ENCODE measurements at regions of chr9 and their contacts with region 1.

Region 1: DNA sequence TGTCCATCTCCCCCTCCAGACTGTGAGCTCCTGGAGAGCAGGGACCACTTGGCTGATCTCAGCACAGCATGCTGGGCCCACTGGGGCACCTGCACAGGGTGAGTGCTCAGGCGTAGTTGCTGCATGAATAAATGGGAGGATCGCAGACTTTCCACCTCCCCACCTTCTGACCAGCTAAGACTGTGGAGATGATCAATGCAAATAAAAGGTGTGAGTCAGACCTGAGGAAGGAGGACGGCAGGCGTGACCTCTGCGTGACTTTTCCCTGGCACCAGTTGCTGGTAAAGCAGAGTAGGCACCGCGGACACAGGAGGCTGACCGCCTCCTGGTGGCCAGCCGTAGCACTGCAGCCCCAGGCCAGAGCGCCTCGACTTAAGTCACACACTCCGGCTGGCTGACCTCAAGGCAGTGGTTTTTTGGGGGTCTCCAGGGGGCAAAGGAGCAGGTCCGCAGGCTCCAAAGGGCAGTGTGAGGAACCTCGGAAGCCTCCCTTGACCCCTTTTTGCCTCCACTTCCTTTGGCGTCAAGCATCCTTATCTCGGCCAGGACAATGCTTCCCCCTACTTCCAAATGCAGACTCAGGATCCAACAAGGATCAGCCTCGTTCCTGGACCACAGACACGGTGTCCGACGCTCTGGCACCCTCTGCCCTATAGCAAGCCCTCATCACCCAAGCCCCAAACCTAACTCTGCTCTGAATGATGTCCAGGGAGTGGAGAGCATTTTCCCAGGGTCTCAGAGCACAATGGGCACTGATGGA is 12.7 kb upstream of the TDRD7 start:
- DNase-seq: peak; percentile 85
- ATAC-seq: peak; percentile 85 to 93
- H3K4me3 ChIP-seq: no peak overlapping the region
- H3K27ac ChIP-seq: peak overlapping the region in 1 of 2 experiments; percentile 59; a peak in 3 of 6 replicates
- H3K4me1 ChIP-seq: peaks cover 10% of the 10 kb centered on the region
- CTCF ChIP-seq: peak; percentile 72
- EP300 ChIP-seq: no peak
- POLR2A ChIP-seq: no peak
- RAD21 ChIP-seq: peak; percentile 80 to 84

Region 2: DNA sequence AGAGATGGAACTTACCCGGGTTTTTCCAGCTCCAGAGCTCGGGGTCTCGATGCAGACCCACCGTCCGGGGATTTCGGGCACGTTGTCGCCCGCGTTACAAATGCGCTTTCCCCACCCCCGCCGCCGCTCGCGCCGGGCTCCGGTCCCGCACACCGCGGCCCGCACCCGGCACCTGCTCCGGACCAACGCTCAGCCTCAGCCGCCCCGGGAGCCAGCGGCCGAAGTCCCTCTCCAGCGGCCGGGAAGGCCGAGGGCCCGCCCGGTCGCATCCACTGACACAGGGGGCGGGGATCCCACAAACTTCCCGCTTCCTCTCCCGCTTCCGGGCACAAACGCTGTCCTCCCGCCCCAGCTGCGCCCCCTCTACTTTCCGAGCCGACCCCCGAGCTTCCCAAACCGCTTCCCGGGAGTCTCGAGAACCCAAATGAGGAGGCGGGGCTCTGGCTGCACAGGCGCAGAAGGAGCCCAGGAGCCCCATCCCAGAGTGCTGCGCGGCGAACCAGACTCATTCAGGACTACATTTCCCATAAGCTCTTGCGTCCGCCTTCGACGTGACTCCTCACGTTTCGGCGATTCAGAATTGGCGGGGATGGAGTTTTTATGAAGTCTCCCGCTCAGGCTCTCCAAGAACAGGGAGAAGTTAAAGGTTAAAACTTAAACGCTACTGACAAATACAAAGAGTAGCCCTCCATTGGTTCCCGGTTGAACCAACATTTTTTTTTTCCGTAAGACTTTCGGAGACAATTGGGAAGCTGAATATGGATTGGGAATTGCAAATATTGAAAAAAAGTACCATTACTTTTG is 544.9 kb before region 1 on chr9 and contains the start of gene ZNF782:
- CTCF ChIA-PET with region 1: interaction called, 10 read pairs
- POLR2A ChIA-PET with region 1: no interaction called
- DNase-seq: peak; percentile 83 to 95
- ATAC-seq: peak; percentile 94 to 99
- H3K4me3 ChIP-seq: peak within 1 kb of the TSS; percentile 65
- H3K27ac ChIP-seq: peak within 1 kb of the TSS; percentile 69 to 89
- H3K4me1 ChIP-seq: no peaks in the 10 kb centered on the region; the same call in 2 of the 3 replicates
- CTCF ChIP-seq: no peak
- EP300 ChIP-seq: no peak
- POLR2A ChIP-seq: peak; percentile 65
- RAD21 ChIP-seq: no peak
- polyA plus RNA-seq, gene ZNF782: 2.1 and 2.7 TPM in 2 replicates

Region 3: DNA sequence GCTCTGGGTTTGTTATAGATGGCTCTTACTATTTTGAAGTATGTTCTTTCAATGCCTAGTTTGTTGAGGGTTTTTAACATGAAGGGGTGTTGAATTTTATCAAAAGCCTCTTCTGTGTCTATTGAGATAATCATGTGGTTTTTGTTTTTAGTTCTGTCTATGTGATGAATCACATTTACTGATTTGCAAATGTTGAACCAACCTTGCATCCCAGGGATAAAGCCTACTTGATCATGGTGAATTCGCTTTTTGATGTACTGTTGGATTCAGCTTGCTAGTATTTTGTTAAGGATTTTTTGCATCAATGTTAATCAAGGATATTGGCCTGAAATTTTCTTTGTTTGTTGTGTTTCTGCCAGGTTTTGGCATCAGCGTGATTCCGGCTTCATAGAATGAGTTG is 66.2 kb before region 1 on chr9:
- CTCF ChIA-PET with region 1: no interaction called
- POLR2A ChIA-PET with region 1: no interaction called
- DNase-seq: no peak
- ATAC-seq: no peak
- H3K4me3 ChIP-seq: no peak overlapping the region
- H3K27ac ChIP-seq: no peak overlapping the region
- H3K4me1 ChIP-seq: no peaks in the 10 kb centered on the region
- CTCF ChIP-seq: no peak
- EP300 ChIP-seq: no peak
- POLR2A ChIP-seq: no peak
- RAD21 ChIP-seq: no peak

Region 4: DNA sequence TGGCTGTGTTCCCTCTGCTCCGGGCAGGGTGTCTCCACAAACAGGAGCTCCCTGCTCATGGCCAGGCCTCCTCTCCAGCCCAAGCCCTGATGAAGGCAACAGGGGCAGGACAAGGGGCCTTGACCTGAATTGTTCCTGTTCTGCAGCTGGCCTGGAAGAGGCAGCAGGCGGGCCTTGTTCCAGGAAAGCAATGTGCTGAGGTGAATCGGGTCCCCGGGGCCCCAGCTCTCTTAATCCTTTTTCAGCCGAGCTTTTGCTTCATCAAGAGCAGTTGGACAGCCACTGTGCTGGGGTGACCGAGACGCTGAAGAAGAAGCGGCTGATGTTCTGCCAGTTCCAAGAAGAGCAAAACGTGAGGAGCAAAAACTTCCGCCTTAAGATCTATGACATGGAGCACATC is 50.3 kb before region 1 on chr9:
- CTCF ChIA-PET with region 1: no interaction called
- POLR2A ChIA-PET with region 1: no interaction called
- DNase-seq: no peak
- ATAC-seq: no peak
- H3K4me3 ChIP-seq: no peak overlapping the region
- H3K27ac ChIP-seq: no peak overlapping the region
- H3K4me1 ChIP-seq: no peaks in the 10 kb centered on the region
- CTCF ChIP-seq: no peak
- EP300 ChIP-seq: no peak
- POLR2A ChIP-seq: no peak
- RAD21 ChIP-seq: no peak

Region 5: GRCh38 chr9:97411789-97412625 is 12.8 kb after region 1 on chr9 and contains the start of gene TDRD7:
- CTCF ChIA-PET with region 1: interaction called, 12 read pairs
- POLR2A ChIA-PET with region 1: no interaction called
- DNase-seq: peak; percentile 76 to 83
- ATAC-seq: peak; percentile 86 to 90
- H3K4me3 ChIP-seq: peak within 1 kb of the TSS; percentile 100
- H3K27ac ChIP-seq: peak within 1 kb of the TSS; percentile 88 to 93
- H3K4me1 ChIP-seq: peaks cover 9% of the 10 kb centered on the region; the same call in 2 of the 3 replicates
- CTCF ChIP-seq: peak; percentile 99
- EP300 ChIP-seq: no peak
- POLR2A ChIP-seq: no peak
- RAD21 ChIP-seq: peak; percentile 60 to 83
- polyA plus RNA-seq, gene TDRD7: 15.7 and 18.3 TPM in 2 replicates

Region 6: GRCh38 chr9:97440160-97440559 is 41.0 kb after region 1 on chr9:
- CTCF ChIA-PET with region 1: no interaction called
- POLR2A ChIA-PET with region 1: no interaction called
- DNase-seq: no peak
- ATAC-seq: no peak
- H3K4me3 ChIP-seq: no peak overlapping the region
- H3K27ac ChIP-seq: no peak overlapping the region
- H3K4me1 ChIP-seq: 0 out of 3 replicates have a peak, but pooled peaks cover 3% of the 10 kb centered on the region
- CTCF ChIP-seq: no peak
- EP300 ChIP-seq: no peak
- POLR2A ChIP-seq: no peak
- RAD21 ChIP-seq: no peak